Psoas muscle (tissue), 8 donors: ENCODE measurements at regions of chr9 and their contacts with region 1.

Region 1: GRCh38 chr9:68704814-68705530 is at the start of gene PIP5K1B:
- DNase-seq: peak; percentile 56 to 84
- ATAC-seq: peak; percentile 84 to 92 (median 90)
- H3K4me3 ChIP-seq: peak within 1 kb of the TSS; percentile 83
- H3K27ac ChIP-seq: peak within 1 kb of the TSS; percentile 80
- H3K4me1 ChIP-seq: no peaks in the 10 kb centered on the region
- H3K27me3 ChIP-seq: no peaks in the 10 kb centered on the region
- CTCF ChIP-seq: peak; percentile 10
- total RNA-seq, gene PIP5K1B: 1.1 to 1.9 (median 1.8) TPM

Region 2: DNA sequence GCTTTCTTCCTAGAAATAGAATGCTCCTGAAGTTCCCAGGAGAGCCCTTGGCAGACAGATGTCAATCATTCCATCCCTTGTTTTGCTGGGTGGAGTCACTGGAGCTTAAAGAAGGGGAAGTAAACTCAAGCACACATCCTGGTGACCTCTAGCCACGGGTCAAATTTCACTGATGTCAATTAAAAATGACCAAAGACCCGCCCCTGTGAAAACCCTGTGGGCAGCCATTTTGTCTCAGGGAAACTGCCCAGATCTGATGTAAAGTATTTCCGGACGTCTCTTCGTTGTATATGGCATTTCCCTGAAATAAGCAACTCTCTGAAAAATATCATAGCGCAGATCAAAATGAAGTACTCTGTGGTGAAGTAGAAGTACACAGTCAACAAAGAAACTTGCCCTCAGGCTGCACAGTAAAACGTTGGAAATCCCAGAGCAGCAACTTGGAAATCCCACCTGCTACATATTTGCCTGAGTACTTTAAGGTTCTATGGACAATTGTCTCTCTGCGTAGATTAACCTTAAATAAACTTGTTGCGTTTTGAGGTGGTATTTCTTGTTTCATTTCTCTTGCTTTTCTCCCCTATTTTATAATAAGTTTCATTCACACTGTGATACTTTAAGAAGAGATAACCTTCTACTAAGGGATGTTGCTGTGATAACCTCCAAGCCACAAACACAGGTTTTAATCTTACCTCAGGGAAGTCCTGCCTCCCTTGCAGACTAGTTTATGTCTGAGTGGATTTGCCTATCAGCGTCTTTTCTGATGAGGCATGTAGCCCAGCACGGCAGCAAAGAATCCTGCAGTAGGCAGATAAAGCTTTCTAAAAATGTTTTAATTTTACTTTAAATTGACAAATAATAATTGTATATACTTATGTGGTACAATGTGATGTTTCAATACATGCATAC is 60.8 kb before region 1 on chr9:
- intact Hi-C with region 1: no loop called
- DNase-seq: no peak
- ATAC-seq: no peak
- H3K4me3 ChIP-seq: no peak overlapping the region
- H3K27ac ChIP-seq: no peak overlapping the region
- H3K4me1 ChIP-seq: no peaks in the 10 kb centered on the region
- H3K27me3 ChIP-seq: no peaks in the 10 kb centered on the region
- CTCF ChIP-seq: no peak

Region 3: GRCh38 chr9:68779558-68780384 is 74.8 kb after region 1 on chr9:
- intact Hi-C with region 1: loop called in 1 of 2 experiments (anchors 10 kb)
- DNase-seq: peak; percentile 96 to 98
- ATAC-seq: peak; percentile 91 to 96 (median 95)
- H3K4me3 ChIP-seq: peak overlapping the region; percentile 77
- H3K27ac ChIP-seq: peak overlapping the region; percentile 93
- H3K4me1 ChIP-seq: peaks cover 45% of the 10 kb centered on the region
- H3K27me3 ChIP-seq: no peaks in the 10 kb centered on the region
- CTCF ChIP-seq: peak; percentile 28

Region 4: DNA sequence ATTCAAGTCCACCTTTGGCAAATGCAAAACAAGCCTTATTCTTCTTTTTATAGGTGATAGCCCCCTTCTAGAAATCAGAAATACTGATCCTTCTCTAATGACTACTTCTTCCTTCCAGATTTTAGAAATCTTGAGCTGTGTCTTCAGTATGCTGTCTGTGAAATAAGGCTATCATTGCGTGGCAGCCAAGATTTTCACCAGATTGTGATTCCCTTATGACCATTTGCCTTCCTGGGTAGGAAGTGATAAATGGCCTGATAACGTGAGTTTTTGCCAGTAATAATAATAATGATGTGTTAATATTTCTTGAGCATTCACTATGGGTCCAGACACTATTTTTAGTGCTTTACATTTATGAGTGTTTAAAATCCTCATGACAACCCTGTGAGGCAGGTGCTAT is 81.0 kb after region 1 on chr9:
- intact Hi-C with region 1: loop called in 1 of 2 experiments (anchors 5 kb)
- DNase-seq: no peak
- ATAC-seq: no peak
- H3K4me3 ChIP-seq: no peak overlapping the region
- H3K27ac ChIP-seq: no peak overlapping the region
- H3K4me1 ChIP-seq: peaks cover 46% of the 10 kb centered on the region
- H3K27me3 ChIP-seq: no peaks in the 10 kb centered on the region
- CTCF ChIP-seq: no peak

Region 5: DNA sequence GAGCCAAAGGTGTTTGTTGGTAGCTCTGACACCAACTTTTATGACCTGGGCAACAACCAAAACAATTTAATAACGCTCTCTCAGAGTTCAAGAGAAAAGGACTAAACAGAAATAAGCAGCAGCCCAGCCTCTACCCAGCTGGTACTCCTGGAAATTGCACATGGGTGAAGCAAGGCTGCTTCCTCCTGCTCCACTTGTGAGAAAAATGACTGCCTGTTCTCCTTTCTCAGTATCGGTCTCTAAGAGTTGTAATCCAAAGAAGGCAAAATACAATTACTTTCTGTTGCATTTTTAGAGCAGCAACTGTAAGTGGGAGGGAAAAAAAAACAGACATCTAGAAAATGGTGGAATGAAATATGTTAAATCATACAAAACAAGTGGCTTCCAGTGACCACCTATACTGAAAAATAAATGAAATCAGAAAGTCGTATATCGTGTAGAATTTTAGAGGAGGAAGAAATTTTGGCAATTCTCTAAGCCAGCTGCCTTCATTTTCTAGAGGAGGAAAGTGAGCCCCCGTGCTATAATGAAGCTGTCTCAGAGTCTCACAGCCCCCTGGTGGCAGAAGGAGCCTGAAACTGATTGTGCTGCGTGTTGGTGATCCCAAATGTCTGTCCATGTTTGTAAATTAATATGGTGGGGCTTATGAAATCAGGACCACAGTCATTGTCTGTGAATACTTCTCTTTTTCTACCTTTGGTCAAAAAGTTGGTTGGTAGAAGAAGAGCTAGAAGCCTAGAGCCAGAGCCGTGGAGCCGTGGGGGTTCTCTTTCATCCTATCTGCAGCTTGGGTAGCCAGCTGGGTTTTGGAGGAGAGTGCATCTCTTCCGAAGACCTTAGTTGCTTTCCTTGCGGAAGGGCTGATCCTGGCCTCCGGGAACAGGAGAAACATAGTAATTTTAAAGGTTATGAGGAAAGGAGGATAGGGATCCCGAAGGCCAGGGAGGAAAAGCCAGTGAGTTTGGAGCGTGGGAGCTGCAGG is 139.9 kb after region 1 on chr9:
- intact Hi-C with region 1: loop called in 1 of 2 experiments (anchors 10 kb)
- DNase-seq: peak in 1 of 2 donors; percentile 22
- ATAC-seq: peak in 3 of 4 donors; percentile 63 to 81 (median 68)
- H3K4me3 ChIP-seq: no peak overlapping the region
- H3K27ac ChIP-seq: no peak overlapping the region
- H3K4me1 ChIP-seq: peaks cover 7% of the 10 kb centered on the region
- H3K27me3 ChIP-seq: no peaks in the 10 kb centered on the region
- CTCF ChIP-seq: peak; percentile 53

Region 6: GRCh38 chr9:69035438-69036308 is 330.7 kb after region 1 on chr9 and contains the start of gene FXN:
- intact Hi-C with region 1: no loop called
- DNase-seq: peak; percentile 85 to 91
- ATAC-seq: peak; percentile 96 to 97 (median 96)
- H3K4me3 ChIP-seq: peak within 1 kb of the TSS; percentile 92
- H3K27ac ChIP-seq: peak within 1 kb of the TSS; percentile 92
- H3K4me1 ChIP-seq: no peaks in the 10 kb centered on the region
- H3K27me3 ChIP-seq: no peaks in the 10 kb centered on the region
- CTCF ChIP-seq: peak; percentile 99
- total RNA-seq, gene FXN: 17.9 to 25.0 (median 18.7) TPM